HepG2 (cell line): ENCODE measurements at regions of chr20 and their contacts with region 1.

Region 1: DNA sequence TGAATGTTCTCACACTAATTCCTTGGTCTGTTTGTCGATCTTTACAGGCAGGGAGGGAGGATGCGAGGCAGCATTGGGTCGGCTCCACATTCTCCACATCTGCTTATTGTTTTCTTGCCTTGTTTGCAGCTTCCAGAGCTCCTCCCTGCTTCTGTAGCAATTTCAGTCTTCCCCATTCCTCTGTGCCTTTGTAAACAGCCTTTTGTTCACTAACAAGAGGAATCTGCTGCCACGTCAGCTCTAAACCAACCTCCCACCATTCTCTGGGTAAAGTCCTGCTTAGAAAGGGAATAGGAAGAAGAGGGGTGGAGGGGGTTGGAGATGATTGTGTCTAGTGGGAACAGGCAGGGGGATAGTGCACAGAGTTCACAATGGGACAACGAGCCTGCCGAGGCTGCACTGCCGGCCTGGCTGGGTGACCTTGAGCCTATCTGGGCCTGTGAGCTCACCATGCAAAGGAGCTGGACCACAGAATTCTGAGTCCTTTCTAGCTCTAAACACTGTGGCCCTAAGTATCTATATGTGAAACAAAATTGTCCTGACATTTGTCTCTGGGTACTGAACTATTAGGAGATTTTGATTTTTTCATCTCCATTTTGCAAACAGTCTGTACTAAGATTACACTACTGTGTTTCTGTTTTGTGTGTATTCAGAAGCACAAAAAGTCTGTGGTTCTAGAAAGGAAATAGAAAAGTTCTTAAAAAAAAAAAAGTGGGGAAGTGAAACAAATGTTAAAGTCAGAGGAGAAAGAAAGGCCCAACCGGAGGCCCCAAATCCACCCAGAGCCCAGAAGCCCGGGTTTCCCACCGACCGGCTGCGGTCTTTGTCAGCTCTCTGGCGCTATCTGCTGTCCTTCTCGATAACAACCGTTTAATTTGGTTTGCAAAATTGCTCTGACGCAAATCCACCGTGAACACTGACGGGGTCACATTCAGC is 1.4 kb upstream of the PRND start:
- DNase-seq: peak; percentile 93
- ATAC-seq: peak; percentile 92
- H3K4me3 ChIP-seq: peak overlapping the region; percentile 9 to 54 (median 37); a peak in 3 of 6 replicates
- H3K27ac ChIP-seq: peak overlapping the region; percentile 5
- H3K4me1 ChIP-seq: peaks cover 17% of the 10 kb centered on the region
- H3K27me3 ChIP-seq: peaks cover 5 to 52% of the 10 kb centered on the region in 2 experiments
- CTCF ChIP-seq: peak; percentile 93
- EP300 ChIP-seq: peak in 1 of 2 experiments; percentile 45; a peak in 1 of 4 replicates
- POLR2A ChIP-seq: no peak
- RAD21 ChIP-seq: peak; percentile 96

Region 2: GRCh38 chr20:4252005-4252404 is 468.3 kb before region 1 on chr20:
- CTCF ChIA-PET with region 1: no interaction called
- POLR2A ChIA-PET with region 1: no interaction called
- in situ Hi-C with region 1: loop called (anchors 5 kb)
- intact Hi-C with region 1: no loop called
- DNase-seq: no peak
- ATAC-seq: no peak
- H3K4me3 ChIP-seq: no peak overlapping the region
- H3K27ac ChIP-seq: no peak overlapping the region
- H3K4me1 ChIP-seq: peaks cover 9% of the 10 kb centered on the region
- H3K27me3 ChIP-seq: peaks cover 14 to 43% of the 10 kb centered on the region in 2 experiments; a peak in 4 of 5 replicates
- CTCF ChIP-seq: no peak
- EP300 ChIP-seq: no peak
- POLR2A ChIP-seq: no peak
- RAD21 ChIP-seq: no peak

Region 3: DNA sequence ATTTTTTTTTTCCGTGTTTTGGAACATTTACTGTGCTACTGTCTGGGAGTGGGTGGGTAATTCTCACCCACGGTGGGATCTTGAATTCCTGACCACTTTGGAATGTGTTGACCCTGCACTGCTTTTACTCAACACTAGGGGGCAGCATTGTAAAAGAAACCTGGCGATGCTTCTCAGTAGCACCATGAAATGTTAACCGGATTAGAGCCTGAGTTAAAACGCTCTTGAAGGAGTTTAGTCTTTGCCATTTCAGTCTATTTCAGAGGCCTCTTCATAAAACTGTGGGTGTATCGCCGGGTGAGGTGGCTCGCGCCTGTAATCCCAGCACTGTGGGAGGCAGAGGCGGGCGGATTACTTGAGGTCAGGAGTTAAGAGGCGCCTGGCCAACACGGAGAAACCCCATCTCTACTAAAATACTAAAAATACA is 113.0 kb before region 1 on chr20:
- CTCF ChIA-PET with region 1: interaction called, 210 read pairs
- POLR2A ChIA-PET with region 1: interaction called, 3 read pairs
- in situ Hi-C with region 1: loop called (anchors 5 kb)
- intact Hi-C with region 1: loop called (anchors 1 kb)
- DNase-seq: peak; percentile 78
- ATAC-seq: peak; percentile 89
- H3K4me3 ChIP-seq: no peak overlapping the region
- H3K27ac ChIP-seq: no peak overlapping the region
- H3K4me1 ChIP-seq: no peaks in the 10 kb centered on the region
- H3K27me3 ChIP-seq: peaks cover 4 to 38% of the 10 kb centered on the region in 2 experiments
- CTCF ChIP-seq: peak; percentile 95
- EP300 ChIP-seq: no peak
- POLR2A ChIP-seq: no peak
- RAD21 ChIP-seq: peak; percentile 96

Region 4: DNA sequence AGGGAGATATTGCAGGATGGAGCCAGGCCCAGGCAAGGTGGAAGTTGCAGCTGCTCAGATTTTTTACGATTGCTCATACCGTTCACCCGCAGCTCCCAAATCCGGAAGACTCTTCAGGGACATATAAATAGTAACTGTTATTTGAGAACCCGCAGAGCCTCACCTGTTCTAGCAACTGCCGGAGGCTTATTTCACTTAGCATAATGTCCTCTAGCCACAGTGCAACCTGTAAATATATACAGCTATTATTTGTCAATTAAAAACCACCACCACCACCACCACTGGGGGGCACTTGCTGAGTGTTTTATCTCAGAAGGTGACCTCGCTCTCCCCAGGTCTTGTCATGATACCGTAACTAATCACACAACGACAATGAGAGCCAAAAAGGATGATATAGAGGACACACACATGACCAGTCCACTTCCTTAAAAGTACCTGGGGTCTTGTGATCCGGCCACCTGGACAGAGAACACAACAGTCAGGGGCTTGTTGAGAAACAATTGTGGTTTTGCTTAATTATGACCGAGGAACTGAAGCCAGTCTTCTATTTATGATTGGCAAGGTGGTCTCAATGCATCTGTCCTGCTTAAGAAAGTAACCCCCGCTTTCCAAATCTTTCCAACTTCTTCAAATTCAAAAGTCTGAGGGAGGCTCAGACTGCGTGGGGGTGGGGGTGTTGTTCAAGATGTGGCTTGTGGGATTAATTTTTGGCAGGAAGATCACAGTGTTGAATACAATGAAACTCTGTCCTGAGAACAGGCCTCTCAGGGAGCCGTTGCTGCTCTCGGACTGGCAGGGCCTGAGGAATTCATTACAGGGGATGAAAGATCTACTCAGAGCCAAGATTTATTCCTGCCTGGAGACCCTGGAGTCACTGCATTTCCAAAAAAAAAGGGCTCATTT is 106.3 kb before region 1 on chr20:
- CTCF ChIA-PET with region 1: interaction called, 210 read pairs
- POLR2A ChIA-PET with region 1: interaction called, 3 read pairs
- in situ Hi-C with region 1: loop called (anchors 5 kb)
- intact Hi-C with region 1: loop called (anchors 1 kb)
- DNase-seq: peak; percentile 66
- ATAC-seq: peak; percentile 78
- H3K4me3 ChIP-seq: no peak overlapping the region
- H3K27ac ChIP-seq: no peak overlapping the region
- H3K4me1 ChIP-seq: no peaks in the 10 kb centered on the region
- H3K27me3 ChIP-seq: peaks cover 6 to 44% of the 10 kb centered on the region in 2 experiments; a peak in 4 of 5 replicates
- CTCF ChIP-seq: peak; percentile 76
- EP300 ChIP-seq: no peak
- POLR2A ChIP-seq: no peak
- RAD21 ChIP-seq: peak; percentile 78